Right cardiac atrium (tissue), 5 donors: ENCODE measurements at regions of chr3 and their contacts with region 1.

Region 1: GRCh38 chr3:141875374-141875892 is 1.0 kb upstream of the ATP1B3 start:
- DNase-seq: peak; percentile 85 to 93 (median 93)
- ATAC-seq: peak; percentile 92 to 93
- H3K4me3 ChIP-seq: peak overlapping the region; percentile 99
- H3K27ac ChIP-seq: peak overlapping the region; percentile 97
- H3K4me1 ChIP-seq: no peaks in the 10 kb centered on the region
- H3K27me3 ChIP-seq: no peaks in the 10 kb centered on the region

Region 2: DNA sequence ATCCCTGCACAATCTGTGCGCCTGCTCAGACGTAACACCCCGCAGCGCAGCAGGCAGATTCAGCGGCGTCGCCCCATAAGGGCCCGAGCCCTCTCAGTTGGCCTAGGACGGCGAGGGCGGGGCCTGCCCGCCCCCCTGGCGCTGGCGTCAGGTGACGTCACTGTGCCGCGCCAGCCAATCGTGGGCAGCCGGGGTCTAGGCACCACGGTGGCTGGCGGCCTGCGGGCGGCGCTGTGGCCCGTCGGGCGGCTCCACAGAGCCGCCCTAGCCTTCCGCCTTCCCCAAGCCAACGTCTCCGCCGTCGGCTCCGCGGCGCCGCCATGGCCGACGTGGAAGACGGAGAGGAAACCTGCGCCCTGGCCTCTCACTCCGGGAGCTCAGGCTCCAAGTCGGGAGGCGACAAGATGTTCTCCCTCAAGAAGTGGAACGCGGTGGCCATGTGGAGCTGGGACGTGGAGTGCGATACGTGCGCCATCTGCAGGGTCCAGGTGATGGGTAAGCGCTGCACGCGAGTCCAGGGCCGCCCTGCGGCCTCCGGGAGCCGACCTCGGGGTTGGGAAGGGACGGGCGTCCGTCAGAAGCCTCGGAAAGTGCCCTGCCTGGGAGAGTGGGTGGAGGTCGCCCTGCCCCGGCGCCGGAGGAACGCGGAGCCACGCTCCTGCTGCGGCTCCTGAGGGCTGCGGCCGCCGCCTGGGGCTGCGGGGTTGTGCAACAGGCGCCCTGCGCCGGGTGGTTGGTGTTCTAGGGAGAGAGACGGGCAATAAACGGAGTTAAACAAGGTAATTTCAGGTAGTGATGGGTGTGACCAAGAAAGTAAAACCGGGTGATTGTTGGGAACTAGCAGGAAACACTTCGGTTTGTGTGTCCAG is 137.2 kb before region 1 on chr3 and contains the start of gene RNF7:
- intact Hi-C with region 1: loop called in 2 of 4 experiments (anchors 2 to 10 kb)
- DNase-seq: peak; percentile 95 to 98 (median 98)
- ATAC-seq: peak; percentile 98 to 99
- H3K4me3 ChIP-seq: peak within 1 kb of the TSS; percentile 91
- H3K27ac ChIP-seq: peak within 1 kb of the TSS; percentile 93
- H3K4me1 ChIP-seq: no peaks in the 10 kb centered on the region
- H3K27me3 ChIP-seq: no peaks in the 10 kb centered on the region
- total RNA-seq, gene RNF7: 66.2 to 91.6 (median 75.3) TPM

Region 3: GRCh38 chr3:141796081-141796888 is 79.1 kb before region 1 on chr3:
- intact Hi-C with region 1: loop called in 1 of 4 experiments (anchors 10 kb)
- DNase-seq: peak; percentile 80 to 91 (median 83)
- ATAC-seq: peak; percentile 54 to 73
- H3K4me3 ChIP-seq: no peak overlapping the region
- H3K27ac ChIP-seq: peak overlapping the region; percentile 51
- H3K4me1 ChIP-seq: peaks cover 3% of the 10 kb centered on the region
- H3K27me3 ChIP-seq: no peaks in the 10 kb centered on the region

Region 4: DNA sequence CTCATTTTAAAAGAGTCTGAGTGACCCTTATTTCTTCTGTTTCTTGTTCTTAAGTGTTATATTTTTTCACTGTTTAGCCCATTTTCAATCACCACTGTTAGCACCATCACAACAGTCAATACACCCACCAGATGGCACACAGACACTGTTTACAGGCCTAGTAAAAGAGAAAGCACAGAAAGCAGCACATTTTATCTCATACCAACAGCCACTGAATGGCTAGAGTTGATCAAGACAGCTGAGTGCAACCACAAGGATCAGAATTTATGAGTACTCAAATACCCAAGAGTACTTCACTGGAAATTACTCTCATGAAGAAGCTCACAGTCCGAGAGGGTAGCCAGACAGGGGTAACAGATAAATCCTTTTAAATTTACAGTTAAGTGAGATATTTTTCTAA is 146.9 kb after region 1 on chr3:
- intact Hi-C with region 1: no loop called
- DNase-seq: no peak
- ATAC-seq: peak; percentile 39 to 57
- H3K4me3 ChIP-seq: no peak overlapping the region
- H3K27ac ChIP-seq: no peak overlapping the region
- H3K4me1 ChIP-seq: peaks cover 4% of the 10 kb centered on the region
- H3K27me3 ChIP-seq: no peaks in the 10 kb centered on the region

Region 5: GRCh38 chr3:142065344-142065743 is 189.9 kb after region 1 on chr3:
- intact Hi-C with region 1: no loop called
- DNase-seq: no peak
- ATAC-seq: no peak
- H3K4me3 ChIP-seq: no peak overlapping the region
- H3K27ac ChIP-seq: no peak overlapping the region
- H3K4me1 ChIP-seq: no peaks in the 10 kb centered on the region
- H3K27me3 ChIP-seq: no peaks in the 10 kb centered on the region